A549 (cell line): ENCODE measurements at regions of chr1 and their contacts with region 1.

Region 1: DNA sequence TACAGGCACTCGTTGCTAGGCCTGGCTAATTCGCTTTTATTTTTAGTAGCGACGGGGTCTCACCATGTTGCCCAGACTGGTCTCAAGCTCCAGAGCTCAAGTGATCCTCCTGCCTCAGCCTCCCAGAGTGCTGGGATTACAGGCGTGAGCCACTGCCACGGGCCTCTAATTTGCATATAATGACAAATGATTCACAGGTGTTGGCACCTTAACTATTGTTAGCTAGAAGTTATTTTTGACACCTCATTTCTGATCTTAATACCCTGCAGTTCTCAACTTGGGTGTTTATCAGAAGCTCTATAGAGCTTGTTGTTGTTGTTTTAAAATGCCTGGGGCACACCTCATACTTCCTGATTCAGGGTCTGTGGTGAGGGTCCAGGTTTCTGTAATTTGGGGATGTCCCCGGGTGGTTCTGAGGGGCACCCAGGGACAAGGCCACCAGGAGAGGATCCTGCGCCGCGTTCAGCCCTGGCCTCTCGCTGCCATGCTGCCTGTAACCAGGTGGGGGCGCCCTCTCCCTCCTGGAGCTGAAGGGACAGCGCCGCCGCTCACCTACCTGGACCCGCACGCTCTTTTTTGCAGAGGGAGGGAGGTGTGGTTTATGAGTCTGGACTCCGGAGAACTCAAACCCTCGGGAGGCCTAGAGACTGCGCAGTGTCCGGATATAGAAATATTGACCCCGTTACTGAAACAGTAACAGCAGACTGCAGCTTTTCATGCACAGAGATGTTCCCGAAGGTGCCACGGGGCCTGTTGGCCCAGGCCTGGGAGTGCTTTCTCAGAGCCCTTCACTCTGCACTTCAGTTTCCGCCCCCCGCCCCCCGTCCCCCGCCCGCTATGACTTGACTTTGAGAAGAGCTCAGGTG is 23.0 kb upstream of the NEK2 start:
- DNase-seq: peak; percentile 81
- ATAC-seq: peak; percentile 95 to 99
- H3K4me3 ChIP-seq: no peak overlapping the region
- H3K27ac ChIP-seq: peak overlapping the region; percentile 66 to 80
- H3K4me1 ChIP-seq: peaks cover 8% of the 10 kb centered on the region; the same call in 2 of the 3 replicates
- CTCF ChIP-seq: peak; percentile 97
- EP300 ChIP-seq: no peak
- POLR2A ChIP-seq: no peak
- RAD21 ChIP-seq: peak; percentile 99

Region 2: DNA sequence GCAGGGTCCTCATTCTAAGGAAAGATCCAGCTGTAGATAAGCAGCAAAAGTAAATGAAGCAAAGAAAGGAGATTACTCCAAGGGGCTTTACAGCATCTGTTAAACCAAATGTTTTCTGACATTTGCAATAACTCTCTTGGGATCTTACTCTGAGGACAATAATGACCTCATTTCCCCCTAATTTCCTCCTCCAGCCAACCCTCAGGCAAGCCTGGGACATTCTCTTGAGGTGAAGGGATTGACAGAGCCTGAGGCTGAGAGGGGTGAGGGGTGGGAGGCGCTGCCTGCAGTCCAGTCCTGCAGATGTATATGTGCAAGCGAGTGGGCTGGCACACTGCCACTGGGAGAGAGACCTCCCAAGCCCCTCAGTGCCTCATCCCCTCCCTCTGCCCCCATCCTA is 17.6 kb after region 1 on chr1:
- CTCF ChIA-PET with region 1: interaction called, 52 read pairs
- POLR2A ChIA-PET with region 1: no interaction called
- DNase-seq: no peak
- ATAC-seq: no peak
- H3K4me3 ChIP-seq: no peak overlapping the region
- H3K27ac ChIP-seq: no peak overlapping the region
- H3K4me1 ChIP-seq: no peaks in the 10 kb centered on the region
- CTCF ChIP-seq: no peak
- EP300 ChIP-seq: no peak
- POLR2A ChIP-seq: no peak
- RAD21 ChIP-seq: no peak

Region 3: DNA sequence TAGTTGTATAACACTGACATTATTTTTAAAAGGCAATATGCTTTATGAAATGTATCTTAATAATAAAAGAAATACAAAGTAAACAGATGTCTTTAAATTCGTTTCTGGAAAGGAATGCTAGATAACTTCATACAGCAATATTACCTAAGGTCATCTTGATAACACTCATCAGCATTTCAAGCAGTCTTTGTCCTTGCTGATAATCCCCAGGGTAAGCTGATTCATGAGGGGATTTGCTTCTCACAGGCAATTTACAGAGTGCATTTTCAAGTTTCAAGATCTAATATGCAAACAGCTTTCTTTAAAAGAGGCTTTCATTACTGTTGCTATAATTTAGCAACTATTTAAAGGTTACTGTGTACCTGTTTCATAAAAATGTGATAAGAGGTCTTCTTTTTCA is 52.2 kb after region 1 on chr1:
- CTCF ChIA-PET with region 1: interaction called, 13 read pairs
- POLR2A ChIA-PET with region 1: no interaction called
- DNase-seq: no peak
- ATAC-seq: no peak
- H3K4me3 ChIP-seq: no peak overlapping the region
- H3K27ac ChIP-seq: no peak overlapping the region
- H3K4me1 ChIP-seq: peaks cover 18% of the 10 kb centered on the region
- CTCF ChIP-seq: no peak
- EP300 ChIP-seq: no peak
- POLR2A ChIP-seq: no peak
- RAD21 ChIP-seq: no peak

Region 4: GRCh38 chr1:211800925-211801607 is 102.7 kb after region 1 on chr1:
- CTCF ChIA-PET with region 1: interaction called, 17 read pairs
- POLR2A ChIA-PET with region 1: no interaction called
- DNase-seq: no peak
- ATAC-seq: no peak
- H3K4me3 ChIP-seq: no peak overlapping the region
- H3K27ac ChIP-seq: no peak overlapping the region
- H3K4me1 ChIP-seq: peaks cover 6% of the 10 kb centered on the region; the same call in 1 of the 3 replicates
- CTCF ChIP-seq: no peak
- EP300 ChIP-seq: no peak
- POLR2A ChIP-seq: no peak
- RAD21 ChIP-seq: no peak

Region 5: GRCh38 chr1:211843018-211843417 is 144.6 kb after region 1 on chr1:
- CTCF ChIA-PET with region 1: interaction called, 11 read pairs
- POLR2A ChIA-PET with region 1: no interaction called
- DNase-seq: no peak
- ATAC-seq: no peak
- H3K4me3 ChIP-seq: no peak overlapping the region
- H3K27ac ChIP-seq: 0 out of 6 replicates have a peak overlapping the region, but pooled peaks of 1 of the 2 experiments have one; percentile 9
- H3K4me1 ChIP-seq: no peaks in the 10 kb centered on the region
- CTCF ChIP-seq: no peak
- EP300 ChIP-seq: no peak
- POLR2A ChIP-seq: no peak
- RAD21 ChIP-seq: no peak

Region 6: DNA sequence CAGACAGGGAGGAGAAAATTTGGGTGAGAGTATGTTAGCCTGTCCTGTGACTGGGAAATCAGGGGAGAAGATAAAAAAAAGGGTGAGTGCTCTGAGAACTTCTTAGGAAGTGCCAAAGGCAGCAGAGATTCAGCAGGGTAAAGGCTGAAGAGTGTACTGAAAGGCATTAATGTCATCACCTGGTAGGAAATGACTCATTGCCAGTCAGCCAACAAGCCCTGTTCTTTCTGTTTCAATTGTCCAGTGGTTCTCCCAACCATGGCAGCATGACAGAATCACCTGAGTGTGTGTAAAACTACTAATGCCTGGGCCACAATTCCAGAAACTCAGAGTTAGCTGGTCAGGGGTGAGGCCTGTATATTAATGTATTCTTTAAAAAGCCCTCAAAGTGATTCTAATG is 253.5 kb after region 1 on chr1:
- CTCF ChIA-PET with region 1: interaction called, 18 read pairs
- POLR2A ChIA-PET with region 1: no interaction called
- DNase-seq: peak in 1 of 2 experiments; percentile 38
- ATAC-seq: peak; percentile 79 to 89; a peak in 5 of 6 replicates
- H3K4me3 ChIP-seq: no peak overlapping the region
- H3K27ac ChIP-seq: peak overlapping the region; percentile 51 to 58; a peak in 4 of 6 replicates
- H3K4me1 ChIP-seq: peaks cover 15% of the 10 kb centered on the region
- CTCF ChIP-seq: no peak
- EP300 ChIP-seq: no peak
- POLR2A ChIP-seq: no peak
- RAD21 ChIP-seq: no peak